ACHN (cell line): ENCODE measurements at regions of chr12 and their contacts with region 1.

Region 1: DNA sequence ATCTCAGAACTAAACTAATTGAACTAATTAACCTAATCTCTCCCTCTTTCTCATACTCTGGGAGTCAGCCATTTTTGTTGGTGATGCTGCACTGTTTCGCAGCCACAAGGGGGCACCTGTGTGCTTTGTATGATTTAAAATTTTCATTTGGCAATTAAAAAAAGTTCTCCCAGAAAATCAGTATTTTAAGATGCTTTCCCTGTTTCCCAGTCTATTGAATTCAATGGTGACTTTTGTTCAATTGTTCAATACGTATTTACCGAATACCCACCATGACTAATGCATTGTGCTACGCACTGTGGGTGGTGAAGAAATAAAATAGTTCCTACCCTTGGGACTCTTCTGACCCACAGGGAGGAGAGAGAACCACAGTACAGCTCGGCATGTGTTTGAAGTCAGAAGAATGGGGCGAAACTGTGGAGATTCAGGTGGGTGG is 63.7 kb downstream of the ZNF664 start:
- DNase-seq: peak; percentile 48

Region 2: DNA sequence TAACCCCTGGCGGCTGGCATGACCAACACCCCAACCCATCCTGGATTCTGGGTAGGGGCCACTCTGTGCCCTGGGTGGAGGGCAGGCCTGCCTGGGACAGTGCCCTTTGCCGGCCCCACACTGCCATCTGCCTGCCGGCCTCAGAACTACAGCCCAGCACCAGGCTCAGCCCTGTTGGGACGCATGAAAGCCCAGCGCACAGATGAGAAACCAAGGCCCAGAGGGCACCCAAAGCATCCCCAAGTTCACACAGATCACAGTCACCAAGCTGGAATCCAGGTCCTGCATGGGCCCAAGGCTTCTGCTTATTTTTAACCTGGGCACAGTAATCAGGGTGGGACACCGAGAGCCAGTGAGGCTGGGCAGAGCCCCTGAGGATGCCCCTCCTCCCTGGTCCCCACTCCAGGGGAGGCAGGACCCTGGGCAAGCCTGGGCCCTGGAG is 284.4 kb after region 1 on chr12:
- in situ Hi-C with region 1: loop called (anchors 25 kb)
- DNase-seq: peak; percentile 71